ENCODE measurements at regions of chr2 and their contacts with region 1.

Region 1: DNA sequence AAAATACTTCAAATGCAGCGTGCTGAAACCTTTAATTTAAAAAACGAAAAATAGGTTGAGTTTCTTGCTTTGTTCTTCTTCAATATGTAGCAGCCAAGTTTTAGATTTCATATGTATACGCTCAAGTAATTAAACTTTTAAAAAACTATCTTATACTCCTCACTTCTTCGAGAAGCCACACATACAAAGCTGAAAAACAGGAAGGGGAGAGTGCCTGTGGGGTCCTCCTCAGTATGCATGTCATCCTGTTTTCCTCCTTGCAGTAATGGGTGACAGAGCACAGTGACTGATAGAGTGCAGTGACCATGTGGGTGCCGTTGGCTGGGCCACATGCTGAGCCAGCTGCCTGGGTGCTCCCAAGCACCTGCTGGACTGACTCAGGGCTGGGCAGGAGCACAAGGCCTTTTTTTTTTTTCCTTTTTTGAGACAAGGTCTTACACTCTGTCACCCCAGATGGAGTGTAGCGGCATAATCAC is 33.3 kb downstream of the UXS1 start:
- DNase-seq: peak in 13 of 14 experiments; percentile 22 to 74 (median 50)
- ATAC-seq: peak; percentile 56
- H3K4me3 ChIP-seq: peak overlapping the region; percentile 67
- H3K4me3 Mint-ChIP-seq: peak overlapping the region; percentile 89
- H3K27ac ChIP-seq: peak overlapping the region; percentile 83 to 87
- H3K27ac Mint-ChIP-seq: peak overlapping the region; percentile 95
- H3K4me1 ChIP-seq: peaks cover 66% of the 10 kb centered on the region
- H3K4me1 Mint-ChIP-seq: peaks cover 99% of the 10 kb centered on the region
- H3K27me3 ChIP-seq: no peaks in the 10 kb centered on the region
- H3K27me3 Mint-ChIP-seq: no peaks in the 10 kb centered on the region
- CTCF ChIP-seq: no peak

Region 2: GRCh38 chr2:106137731-106138521 is 22.9 kb before region 1 on chr2:
- CTCF ChIA-PET with region 1: interaction called, 5 read pairs
- POLR2A ChIA-PET with region 1: interaction called, 69 read pairs
- intact Hi-C with region 1: loop called in 1 of 2 experiments (anchors 1 kb)
- DNase-seq: peak in 7 of 14 experiments; percentile 17 to 75 (median 52)
- ATAC-seq: peak; percentile 76
- H3K4me3 ChIP-seq: peak overlapping the region; percentile 43
- H3K4me3 Mint-ChIP-seq: peak overlapping the region; percentile 82
- H3K27ac ChIP-seq: peak overlapping the region; percentile 66 to 84
- H3K27ac Mint-ChIP-seq: peak overlapping the region; percentile 91
- H3K4me1 ChIP-seq: peaks cover 51% of the 10 kb centered on the region
- H3K4me1 Mint-ChIP-seq: peaks cover 46% of the 10 kb centered on the region
- H3K27me3 ChIP-seq: no peaks in the 10 kb centered on the region
- H3K27me3 Mint-ChIP-seq: no peaks in the 10 kb centered on the region
- CTCF ChIP-seq: no peak

Region 3: DNA sequence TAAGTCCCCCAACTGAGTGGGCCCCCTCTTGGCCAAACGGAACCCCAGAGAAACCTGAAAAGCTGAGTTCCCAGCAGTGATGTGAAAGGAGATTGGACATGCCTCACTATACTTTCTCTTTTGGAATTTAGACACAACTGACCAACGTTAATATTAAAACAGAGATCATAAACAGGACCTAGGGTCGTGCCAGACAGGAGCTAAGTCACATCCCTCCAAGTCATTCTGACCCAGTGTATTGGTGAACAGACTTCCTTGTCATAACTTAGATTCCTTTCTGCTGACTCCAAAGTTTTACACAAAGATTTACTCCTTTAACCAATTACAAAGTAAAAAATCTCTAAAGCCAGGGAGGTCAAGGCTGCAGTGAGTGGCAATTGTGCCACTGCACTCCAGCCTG is 13.7 kb before region 1 on chr2:
- CTCF ChIA-PET with region 1: interaction called, 6 read pairs
- POLR2A ChIA-PET with region 1: interaction called, 22 read pairs
- intact Hi-C with region 1: no loop called
- DNase-seq: no peak
- ATAC-seq: no peak
- H3K4me3 ChIP-seq: no peak overlapping the region
- H3K4me3 Mint-ChIP-seq: no peak overlapping the region
- H3K27ac ChIP-seq: peak overlapping the region in 1 of 2 donors; percentile 68
- H3K27ac Mint-ChIP-seq: peak overlapping the region; percentile 85
- H3K4me1 ChIP-seq: peaks cover 48% of the 10 kb centered on the region
- H3K4me1 Mint-ChIP-seq: peaks cover 70% of the 10 kb centered on the region
- H3K27me3 ChIP-seq: no peaks in the 10 kb centered on the region
- H3K27me3 Mint-ChIP-seq: no peaks in the 10 kb centered on the region
- CTCF ChIP-seq: no peak

Region 4: DNA sequence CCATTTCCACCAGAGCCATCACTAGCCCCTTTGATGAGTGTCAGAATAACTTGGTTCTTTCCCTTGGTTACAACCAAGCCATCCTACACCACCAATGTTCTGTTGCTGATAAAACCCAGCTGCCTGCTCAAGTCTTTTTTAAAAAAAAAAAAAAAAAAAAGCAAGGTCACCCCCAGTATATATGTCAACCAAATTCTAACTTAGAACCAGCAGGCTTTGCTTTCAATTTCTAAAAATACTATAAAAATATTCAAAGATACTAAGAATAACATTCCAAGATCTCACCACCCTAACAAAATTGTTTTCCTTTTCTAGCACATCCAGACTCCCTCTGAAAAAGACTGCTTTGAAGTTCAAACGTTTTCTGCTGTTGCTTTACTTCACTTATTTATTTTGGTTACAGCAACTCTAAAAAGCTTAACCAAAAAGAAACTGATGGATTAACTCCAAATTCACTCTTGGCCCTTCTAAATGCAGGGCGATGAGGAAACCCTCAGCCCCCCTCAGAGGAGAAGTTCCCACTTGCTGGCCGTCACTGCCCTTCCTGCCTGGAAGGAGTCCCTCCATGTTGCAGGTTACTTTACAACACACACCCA is 22.4 kb after region 1 on chr2:
- CTCF ChIA-PET with region 1: interaction called, 3 read pairs
- POLR2A ChIA-PET with region 1: interaction called, 31 read pairs
- intact Hi-C with region 1: no loop called
- DNase-seq: no peak
- ATAC-seq: no peak
- H3K4me3 ChIP-seq: no peak overlapping the region
- H3K4me3 Mint-ChIP-seq: no peak overlapping the region
- H3K27ac ChIP-seq: no peak overlapping the region
- H3K27ac Mint-ChIP-seq: no peak overlapping the region
- H3K4me1 ChIP-seq: peaks cover 34% of the 10 kb centered on the region
- H3K4me1 Mint-ChIP-seq: peaks cover 84% of the 10 kb centered on the region
- H3K27me3 ChIP-seq: no peaks in the 10 kb centered on the region
- H3K27me3 Mint-ChIP-seq: no peaks in the 10 kb centered on the region
- CTCF ChIP-seq: no peak

Region 5: DNA sequence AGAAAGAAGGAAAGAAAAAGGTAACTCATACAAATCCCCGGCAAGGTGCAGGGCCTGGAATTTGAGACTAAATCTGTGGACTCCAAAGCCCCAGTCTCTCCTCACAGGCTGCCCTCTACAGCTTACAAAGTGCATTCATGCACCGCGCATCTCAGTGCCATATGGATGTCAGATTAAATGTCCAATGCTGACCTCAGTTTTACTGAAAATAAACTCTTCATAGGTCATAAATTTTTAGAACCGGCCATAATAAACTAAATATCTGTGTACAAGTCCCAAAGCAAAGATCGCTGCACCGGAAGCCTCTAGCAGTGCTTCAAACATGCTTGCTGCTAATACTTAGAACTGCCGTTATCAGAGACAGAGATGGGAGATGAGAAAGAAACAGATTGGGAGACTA is 707.5 kb after region 1 on chr2:
- CTCF ChIA-PET with region 1: no interaction called
- POLR2A ChIA-PET with region 1: no interaction called
- intact Hi-C with region 1: no loop called
- DNase-seq: no peak
- ATAC-seq: no peak
- H3K4me3 ChIP-seq: no peak overlapping the region
- H3K4me3 Mint-ChIP-seq: no peak overlapping the region
- H3K27ac ChIP-seq: no peak overlapping the region
- H3K27ac Mint-ChIP-seq: no peak overlapping the region
- H3K4me1 ChIP-seq: no peaks in the 10 kb centered on the region
- H3K4me1 Mint-ChIP-seq: no peaks in the 10 kb centered on the region
- H3K27me3 ChIP-seq: no peaks in the 10 kb centered on the region
- H3K27me3 Mint-ChIP-seq: peaks cover 5% of the 10 kb centered on the region
- CTCF ChIP-seq: no peak